AG04449 (cell line): ENCODE measurements at regions of chr15 and their contacts with region 1.

Region 1: DNA sequence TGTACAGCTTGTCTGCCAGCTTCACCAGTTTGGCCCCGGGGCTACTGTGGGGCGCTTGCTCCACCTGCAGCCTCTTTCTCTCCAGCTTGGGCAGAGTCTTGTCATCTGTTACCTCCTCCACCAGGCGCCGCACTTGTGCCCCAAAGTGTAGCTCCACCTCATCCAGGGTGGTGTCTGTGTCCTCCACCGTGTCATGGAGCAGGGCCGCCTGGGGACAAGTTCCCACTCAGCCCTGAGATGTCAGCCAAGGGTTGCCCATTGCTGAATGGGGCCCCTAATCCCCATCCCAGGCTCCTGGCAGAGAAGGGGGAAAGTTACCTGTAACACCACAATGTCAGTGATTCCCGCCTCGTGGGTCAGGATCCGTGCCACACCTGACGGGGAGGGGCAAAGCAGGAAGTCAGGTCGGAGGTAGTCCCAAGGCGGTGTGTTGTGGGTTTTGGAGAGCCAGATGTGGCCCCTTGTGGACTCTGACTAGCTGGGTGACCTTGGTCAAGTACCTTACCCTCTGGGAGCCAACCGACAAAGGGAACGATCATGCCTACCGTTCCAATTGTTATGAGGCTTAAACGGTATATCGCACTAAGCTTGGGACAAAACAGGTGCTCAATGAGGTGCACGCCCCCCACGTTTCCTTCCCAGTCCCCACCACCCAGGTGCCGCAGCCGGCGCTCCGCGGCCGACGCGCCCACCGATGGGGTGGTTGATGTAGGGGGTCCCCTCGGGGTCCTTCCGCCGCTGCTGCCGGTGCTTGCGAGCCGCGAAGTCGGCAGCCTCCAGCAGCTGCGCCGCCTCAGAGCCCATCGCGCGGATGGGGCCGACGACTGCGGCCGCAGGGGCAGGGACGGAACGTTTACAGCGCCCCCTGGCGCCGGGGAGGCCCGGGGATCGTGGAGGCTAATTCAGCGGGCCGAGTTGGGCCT is at the start of gene HDDC3:
- DNase-seq: no peak
- H3K4me3 ChIP-seq: peak within 1 kb of the TSS; percentile 90
- CTCF ChIP-seq: peak; percentile 98

Region 2: GRCh38 chr15:90654233-90655124 is 277.5 kb before region 1 on chr15:
- CTCF ChIA-PET with region 1: interaction called, 91 read pairs
- POLR2A ChIA-PET with region 1: no interaction called
- DNase-seq: no peak
- H3K4me3 ChIP-seq: no peak overlapping the region
- CTCF ChIP-seq: no peak

Region 3: DNA sequence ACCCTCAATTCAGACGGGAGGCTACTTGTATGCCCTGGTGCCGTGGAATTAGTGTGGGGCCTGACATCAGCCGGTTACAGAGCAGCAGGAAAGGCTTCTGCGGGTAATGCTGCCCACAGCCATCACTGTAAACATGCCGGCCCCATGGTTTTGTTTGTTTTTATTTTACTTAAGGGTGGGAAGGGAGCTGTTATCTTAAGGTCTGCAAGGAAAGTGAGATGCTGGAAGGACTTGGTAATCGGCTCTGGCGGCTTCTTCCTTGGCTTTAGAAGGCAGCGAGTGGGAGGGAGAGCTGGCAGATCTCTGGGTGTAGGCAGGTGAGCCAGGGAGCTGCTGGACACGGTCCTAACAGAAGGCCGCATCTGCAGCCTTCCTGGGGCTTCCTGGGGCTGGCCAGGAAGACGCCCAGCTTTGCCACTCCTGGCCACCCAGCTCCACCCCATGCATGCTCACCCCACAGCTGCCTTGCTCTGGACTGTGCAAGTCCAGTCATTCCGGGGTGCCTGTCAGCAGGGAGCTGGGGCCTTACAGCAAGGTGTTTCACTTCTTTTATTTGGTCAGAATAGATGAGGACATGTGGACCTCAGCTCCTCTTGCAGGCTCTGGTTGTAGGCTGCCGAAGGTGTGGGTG is 117.7 kb before region 1 on chr15:
- CTCF ChIA-PET with region 1: no interaction called
- POLR2A ChIA-PET with region 1: no interaction called
- DNase-seq: no peak
- H3K4me3 ChIP-seq: no peak overlapping the region
- CTCF ChIP-seq: no peak

Region 4: GRCh38 chr15:90895336-90896117 is 36.5 kb before region 1 on chr15:
- CTCF ChIA-PET with region 1: interaction called, 186 read pairs
- POLR2A ChIA-PET with region 1: no interaction called
- DNase-seq: no peak
- H3K4me3 ChIP-seq: no peak overlapping the region
- CTCF ChIP-seq: no peak

Region 5: GRCh38 chr15:90954712-90955671 is 23.0 kb after region 1 on chr15 and contains the start of gene RCCD1:
- CTCF ChIA-PET with region 1: interaction called, 479 read pairs
- POLR2A ChIA-PET with region 1: interaction called, 8 read pairs
- DNase-seq: peak; percentile 64
- H3K4me3 ChIP-seq: peak within 1 kb of the TSS; percentile 86
- CTCF ChIP-seq: no peak

Region 6: DNA sequence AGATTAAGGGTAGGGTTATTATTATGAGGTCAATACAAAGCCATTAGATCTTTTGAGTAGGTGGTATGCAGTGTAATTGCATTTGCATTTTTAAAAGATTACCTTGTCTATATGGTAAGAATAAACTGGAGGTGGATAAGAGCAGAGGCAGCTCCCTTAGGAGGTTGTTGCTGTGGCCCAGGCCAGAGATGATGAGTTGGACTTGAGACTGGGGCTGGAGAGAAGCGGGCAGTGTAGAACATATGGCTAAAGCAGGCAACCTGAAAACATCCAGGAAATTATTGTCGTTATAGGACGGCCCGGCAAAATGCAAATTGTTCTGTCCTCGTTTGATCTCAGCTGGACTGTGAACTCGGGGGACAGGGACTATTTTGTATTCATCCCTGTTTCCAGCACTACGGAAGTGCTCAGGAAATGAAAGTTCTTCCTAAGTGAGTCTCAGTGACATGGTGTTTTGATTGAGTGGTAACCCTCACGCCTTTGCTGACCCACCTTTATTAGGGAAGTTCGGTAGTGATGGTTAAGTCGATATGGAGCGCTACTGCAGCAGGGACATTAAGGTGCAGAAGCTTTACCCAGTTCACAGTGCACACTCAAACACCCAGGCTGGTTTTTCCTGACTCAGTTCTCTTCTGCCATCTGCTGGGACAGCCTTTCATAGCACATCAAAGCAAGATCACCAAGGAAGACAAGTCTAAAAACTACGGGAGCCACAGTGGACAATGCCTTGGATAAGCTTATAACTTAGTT is 117.6 kb after region 1 on chr15:
- CTCF ChIA-PET with region 1: interaction called, 53 read pairs
- POLR2A ChIA-PET with region 1: no interaction called
- DNase-seq: no peak
- H3K4me3 ChIP-seq: no peak overlapping the region; the same call in 1 of the 2 replicates
- CTCF ChIP-seq: peak; percentile 66